ENCODE measurements at regions of chr12 and their contacts with region 1.

Region 1: DNA sequence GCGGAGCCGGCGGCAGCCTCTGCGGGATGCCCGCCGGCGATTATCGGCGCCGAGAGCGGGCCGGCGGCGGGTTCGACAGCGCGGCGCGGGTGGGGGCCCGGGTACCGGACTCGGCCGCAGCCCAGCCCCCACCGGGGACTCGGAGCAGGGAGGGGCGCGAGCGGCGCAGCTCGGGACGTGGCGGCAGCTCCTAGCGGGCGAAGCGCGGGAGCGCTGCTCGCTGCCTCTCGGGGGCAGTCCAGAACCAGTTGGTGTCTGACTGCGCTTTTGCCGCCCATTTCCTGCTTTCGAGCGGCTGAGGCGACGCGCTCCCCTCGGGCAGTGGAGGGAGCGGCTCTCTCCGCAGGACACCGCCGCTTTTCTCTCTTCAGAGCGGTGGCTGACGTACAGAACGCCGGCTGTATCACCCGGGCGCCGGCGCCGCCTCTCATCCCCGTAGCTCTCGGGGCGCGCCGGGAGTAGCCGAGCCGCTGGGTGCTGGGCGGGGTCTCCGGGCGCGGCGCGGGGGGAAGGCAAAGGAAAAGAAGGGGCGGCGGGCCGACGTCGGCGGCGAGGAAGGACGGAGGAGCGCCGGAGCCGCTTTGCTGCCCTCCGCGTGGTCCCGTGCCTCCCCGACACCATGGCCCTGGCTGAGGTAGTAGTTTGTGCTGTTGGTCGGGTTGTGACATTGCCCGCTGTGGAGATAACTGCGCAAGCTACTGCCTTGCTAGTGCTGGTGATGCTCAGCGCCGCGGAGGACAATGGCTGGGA is 136.6 kb downstream of the MON2 start:
- DNase-seq: peak; percentile 81
- ATAC-seq: peak; percentile 77
- H3K4me3 Mint-ChIP-seq: peak overlapping the region; percentile 95
- H3K27ac Mint-ChIP-seq: peak overlapping the region; percentile 98
- H3K4me1 Mint-ChIP-seq: peaks cover 39% of the 10 kb centered on the region
- H3K27me3 Mint-ChIP-seq: no peaks in the 10 kb centered on the region
- CTCF ChIP-seq: peak; percentile 56

Region 2: GRCh38 chr12:62588916-62589315 is 14.3 kb before region 1 on chr12:
- CTCF ChIA-PET with region 1: interaction called, 8 read pairs
- POLR2A ChIA-PET with region 1: interaction called, 10 read pairs
- intact Hi-C with region 1: no loop called
- DNase-seq: no peak
- ATAC-seq: no peak
- H3K4me3 Mint-ChIP-seq: no peak overlapping the region
- H3K27ac Mint-ChIP-seq: no peak overlapping the region
- H3K4me1 Mint-ChIP-seq: no peaks in the 10 kb centered on the region
- H3K27me3 Mint-ChIP-seq: no peaks in the 10 kb centered on the region
- CTCF ChIP-seq: no peak

Region 3: DNA sequence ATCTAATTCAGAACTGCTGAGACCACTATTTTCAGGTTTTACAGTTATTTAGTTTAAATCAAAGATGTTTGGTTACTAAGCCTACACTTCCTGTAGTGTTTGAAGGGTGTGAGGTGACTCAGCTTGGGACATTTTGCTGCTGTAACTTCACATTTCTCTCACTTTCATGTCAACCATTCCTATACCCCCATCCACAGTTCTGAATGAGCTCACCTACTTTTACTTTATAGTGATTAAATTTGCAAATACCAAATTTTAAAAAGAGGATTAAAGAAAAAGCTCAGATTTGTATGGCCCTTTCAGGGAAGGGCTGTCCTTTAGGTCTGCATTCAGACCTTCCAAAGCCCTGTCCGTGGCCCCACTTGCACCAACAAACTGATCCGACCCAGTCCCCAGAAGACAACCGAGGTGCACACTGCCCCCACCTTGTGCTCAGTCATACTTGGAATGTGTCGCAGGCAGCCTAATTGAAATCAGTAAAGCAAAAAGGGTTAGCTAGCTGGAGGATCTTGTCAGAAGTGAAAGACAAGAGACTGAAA is 37.7 kb after region 1 on chr12:
- CTCF ChIA-PET with region 1: interaction called, 5 read pairs
- POLR2A ChIA-PET with region 1: interaction called, 10 read pairs
- intact Hi-C with region 1: loop called (anchors 5 kb)
- DNase-seq: peak; percentile 72
- ATAC-seq: peak; percentile 98
- H3K4me3 Mint-ChIP-seq: peak overlapping the region; percentile 39
- H3K27ac Mint-ChIP-seq: peak overlapping the region; percentile 73
- H3K4me1 Mint-ChIP-seq: peaks cover 24% of the 10 kb centered on the region
- H3K27me3 Mint-ChIP-seq: peaks cover 2% of the 10 kb centered on the region
- CTCF ChIP-seq: no peak